ENCODE measurements at regions of chr10 and their contacts with region 1.

Region 1: DNA sequence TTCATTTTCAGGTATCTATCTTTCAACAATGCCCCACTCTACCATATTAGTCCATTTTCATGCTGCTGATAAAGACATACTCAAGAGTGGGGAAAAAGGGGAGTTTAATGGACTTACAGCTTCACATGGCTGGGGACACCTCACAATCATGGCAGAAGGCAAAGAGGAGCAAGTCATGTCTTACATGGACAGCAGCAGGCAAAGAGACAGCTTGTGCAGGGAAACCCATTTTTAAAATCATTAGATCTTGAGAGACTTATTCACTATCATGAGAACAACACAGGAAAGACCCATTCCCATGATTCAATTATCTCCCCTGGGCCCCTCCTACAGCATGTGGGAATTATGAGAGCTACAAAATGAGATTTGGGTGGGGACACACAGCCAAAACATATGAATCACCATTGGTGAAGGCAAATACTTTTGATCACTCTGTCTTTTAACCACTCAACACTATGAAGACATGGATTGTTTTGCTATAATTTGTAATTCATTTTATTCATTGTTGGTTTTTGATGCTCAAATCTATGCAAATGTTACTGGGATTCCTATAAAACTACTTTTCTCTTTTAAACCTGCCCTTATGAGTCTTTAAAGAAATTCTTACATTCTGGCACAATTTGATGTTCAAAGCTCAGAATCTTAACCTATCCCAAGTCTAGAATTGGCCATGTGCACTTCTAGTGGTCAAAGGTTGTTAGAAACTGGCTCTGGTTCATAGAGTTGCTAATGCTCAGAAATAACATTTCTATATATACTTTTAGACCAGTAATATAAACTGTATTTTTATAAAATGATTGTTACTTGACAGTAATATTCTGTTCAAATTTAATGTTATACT is 15.3 kb downstream of the AKR1C4 start:
- DNase-seq: no peak
- ATAC-seq: peak in 2 of 4 donors; percentile 15 to 51
- H3K4me3 ChIP-seq: no peak overlapping the region
- H3K27ac ChIP-seq: peak overlapping the region in 1 of 3 donors; percentile 6
- H3K4me1 ChIP-seq: peaks cover 0 to 11% (median 4%) of the 10 kb centered on the region in 4 donors
- H3K27me3 ChIP-seq: no peaks in the 10 kb centered on the region
- CTCF ChIP-seq: no peak
- POLR2A ChIP-seq: no peak

Region 2: DNA sequence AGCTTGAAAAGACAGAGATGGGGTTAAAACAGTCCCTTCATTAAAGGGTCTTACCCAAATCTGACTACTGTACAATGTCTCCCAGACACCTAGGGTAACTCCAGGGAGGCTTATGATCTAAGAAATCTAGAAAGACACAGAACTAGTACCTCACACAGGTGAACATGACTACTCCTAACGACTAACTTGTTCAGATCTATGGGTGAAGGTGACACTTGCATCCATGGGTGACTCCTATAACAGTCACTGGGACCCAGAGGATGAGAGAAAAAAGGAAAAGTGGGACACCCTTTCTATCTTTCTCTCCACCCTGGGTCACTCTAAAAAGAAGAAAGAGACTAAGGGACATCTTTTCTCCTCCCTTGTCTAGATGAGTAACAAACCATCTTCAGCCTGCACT is 46.2 kb before region 1 on chr10:
- intact Hi-C with region 1: no loop called
- DNase-seq: no peak
- ATAC-seq: no peak
- H3K4me3 ChIP-seq: no peak overlapping the region
- H3K27ac ChIP-seq: no peak overlapping the region
- H3K4me1 ChIP-seq: no peaks in the 10 kb centered on the region
- H3K27me3 ChIP-seq: no peaks in the 10 kb centered on the region
- CTCF ChIP-seq: no peak
- POLR2A ChIP-seq: no peak

Region 3: GRCh38 chr10:5265139-5265538 is 53.2 kb after region 1 on chr10:
- intact Hi-C with region 1: loop called in 1 of 2 experiments (anchors 10 kb)
- DNase-seq: no peak
- ATAC-seq: peak in 2 of 4 donors; percentile 35 to 69
- H3K4me3 ChIP-seq: no peak overlapping the region
- H3K27ac ChIP-seq: peak overlapping the region in 1 of 3 donors; percentile 11
- H3K4me1 ChIP-seq: peaks cover 0 to 26% (median 0%) of the 10 kb centered on the region in 4 donors
- H3K27me3 ChIP-seq: no peaks in the 10 kb centered on the region
- CTCF ChIP-seq: no peak
- POLR2A ChIP-seq: no peak